Activated B cell treated with CpG ODN at 0.5 μM for 24 hours (primary cell): ENCODE measurements at regions of chr16 and their contacts with region 1.

Region 1: GRCh38 chr16:684067-684794 is at the start of gene JMJD8:
- DNase-seq: peak; percentile 98
- ATAC-seq: peak; percentile 49
- H3K4me3 Mint-ChIP-seq: peak within 1 kb of the TSS; percentile 87
- H3K27ac Mint-ChIP-seq: peak within 1 kb of the TSS; percentile 70
- H3K4me1 Mint-ChIP-seq: peaks cover 38% of the 10 kb centered on the region
- H3K27me3 Mint-ChIP-seq: no peaks in the 10 kb centered on the region
- CTCF ChIP-seq: no peak
- total RNA-seq, gene JMJD8: 41.4 and 47.0 TPM in 2 replicates

Region 2: DNA sequence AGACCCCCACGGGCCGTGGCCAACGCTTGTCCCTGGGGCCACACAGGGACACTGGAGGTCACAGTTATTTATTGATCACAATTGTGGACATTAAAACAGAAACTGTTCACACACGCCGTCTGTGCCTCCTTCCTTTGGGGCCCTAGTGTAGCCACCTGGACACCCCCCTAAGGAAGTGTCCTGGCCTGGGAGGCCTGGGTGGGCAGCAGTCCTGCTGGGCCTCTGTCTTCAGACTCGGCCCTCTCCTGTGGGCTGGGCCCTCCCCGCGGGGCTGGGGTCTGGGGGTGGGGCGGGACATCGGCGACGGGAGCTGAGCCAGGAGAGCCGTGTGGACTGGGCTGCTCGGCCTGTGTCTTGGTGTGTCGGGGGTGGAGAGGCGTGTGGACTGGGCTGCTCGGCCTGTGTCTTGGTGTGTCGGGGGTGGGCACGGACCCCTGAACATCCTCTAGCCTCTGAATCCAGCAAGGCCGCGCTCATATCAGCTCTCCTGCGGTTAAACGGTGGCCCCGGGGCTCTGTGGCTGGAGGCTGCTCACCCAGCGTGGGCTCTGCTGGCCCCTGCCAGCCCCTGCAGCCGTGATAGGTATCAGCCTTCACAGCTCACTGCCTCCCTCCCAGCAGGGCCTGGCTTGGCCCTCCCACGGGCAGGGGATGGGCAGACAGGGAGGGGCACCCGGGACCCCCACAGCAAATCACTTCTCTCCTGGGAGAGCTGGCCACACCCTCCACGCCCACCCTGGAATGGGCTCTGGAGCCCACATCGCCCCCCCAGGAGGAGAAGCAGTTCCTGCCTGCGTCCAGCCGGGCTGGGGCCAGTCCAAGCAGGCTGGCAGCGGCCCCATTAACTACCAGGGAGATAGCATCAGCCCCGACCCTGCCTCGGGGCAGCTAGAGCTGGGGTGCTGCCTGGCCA is 118.6 kb before region 1 on chr16:
- CTCF ChIA-PET with region 1: no interaction called
- POLR2A ChIA-PET with region 1: no interaction called
- intact Hi-C with region 1: no loop called
- DNase-seq: no peak
- ATAC-seq: no peak
- H3K4me3 Mint-ChIP-seq: no peak overlapping the region
- H3K27ac Mint-ChIP-seq: no peak overlapping the region
- H3K4me1 Mint-ChIP-seq: peaks cover 23% of the 10 kb centered on the region
- H3K27me3 Mint-ChIP-seq: peaks cover 7% of the 10 kb centered on the region
- CTCF ChIP-seq: no peak

Region 3: GRCh38 chr16:648781-649589 is 35.2 kb before region 1 on chr16 and contains the start of gene WDR90:
- CTCF ChIA-PET with region 1: no interaction called
- POLR2A ChIA-PET with region 1: interaction called, 13 read pairs
- intact Hi-C with region 1: loop called (anchors 1 kb)
- DNase-seq: peak; percentile 93
- ATAC-seq: peak; percentile 85
- H3K4me3 Mint-ChIP-seq: peak within 1 kb of the TSS; percentile 84
- H3K27ac Mint-ChIP-seq: peak within 1 kb of the TSS; percentile 85
- H3K4me1 Mint-ChIP-seq: peaks cover 22% of the 10 kb centered on the region
- H3K27me3 Mint-ChIP-seq: no peaks in the 10 kb centered on the region
- CTCF ChIP-seq: no peak
- total RNA-seq, gene WDR90: 24.8 and 33.7 TPM in 2 replicates

Region 4: GRCh38 chr16:660459-661183 is 23.6 kb before region 1 on chr16:
- CTCF ChIA-PET with region 1: no interaction called
- POLR2A ChIA-PET with region 1: interaction called, 4 read pairs
- intact Hi-C with region 1: loop called (anchors 2 kb)
- DNase-seq: peak; percentile 61
- ATAC-seq: peak; percentile 91
- H3K4me3 Mint-ChIP-seq: peak overlapping the region; percentile 55
- H3K27ac Mint-ChIP-seq: no peak overlapping the region
- H3K4me1 Mint-ChIP-seq: peaks cover 7% of the 10 kb centered on the region
- H3K27me3 Mint-ChIP-seq: no peaks in the 10 kb centered on the region
- CTCF ChIP-seq: no peak

Region 5: DNA sequence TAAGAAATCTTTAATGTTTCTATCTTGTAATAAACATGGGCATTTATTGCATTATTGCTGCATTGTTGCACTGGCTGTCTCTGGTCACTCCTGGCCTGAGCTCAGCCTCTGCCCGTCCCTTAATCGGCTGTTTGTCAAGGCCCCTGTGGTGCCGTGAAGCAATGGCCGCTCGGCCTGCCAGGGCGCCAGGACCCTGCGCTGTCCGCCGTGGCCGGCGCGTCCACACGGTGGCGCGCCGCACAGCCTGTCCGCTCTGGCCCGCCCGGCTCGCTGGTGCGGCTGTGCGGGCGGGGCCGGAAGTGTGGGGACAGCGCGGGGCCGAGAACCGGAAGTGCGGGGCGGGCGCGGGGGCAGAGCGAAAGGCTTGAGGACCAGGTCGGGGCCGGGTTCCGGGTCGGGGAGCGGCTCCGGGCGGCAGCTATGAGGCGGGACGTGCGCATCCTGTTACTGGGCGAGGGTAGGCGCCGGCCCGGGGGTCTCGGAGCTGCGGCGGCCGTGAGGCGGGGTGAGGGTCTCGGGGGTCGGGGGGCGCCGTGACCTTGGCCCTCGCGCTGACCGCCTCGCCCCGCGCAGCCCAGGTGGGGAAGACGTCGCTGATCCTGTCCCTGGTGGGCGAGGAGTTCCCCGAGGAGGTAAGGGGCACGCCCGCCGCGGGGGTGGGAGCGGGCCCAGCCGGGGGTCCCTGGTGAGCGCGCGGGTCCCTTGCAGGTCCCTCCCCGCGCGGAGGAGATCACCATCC is 16.3 kb before region 1 on chr16 and contains the start of gene RHOT2:
- CTCF ChIA-PET with region 1: interaction called, 3 read pairs
- POLR2A ChIA-PET with region 1: interaction called, 41 read pairs
- intact Hi-C with region 1: loop called (anchors 1 kb)
- DNase-seq: peak; percentile 96
- ATAC-seq: peak; percentile 98
- H3K4me3 Mint-ChIP-seq: peak within 1 kb of the TSS; percentile 80
- H3K27ac Mint-ChIP-seq: peak within 1 kb of the TSS; percentile 80
- H3K4me1 Mint-ChIP-seq: peaks cover 12% of the 10 kb centered on the region
- H3K27me3 Mint-ChIP-seq: no peaks in the 10 kb centered on the region
- CTCF ChIP-seq: peak; percentile 7
- total RNA-seq, gene RHOT2: 141 and 170 TPM in 2 replicates

Region 6: DNA sequence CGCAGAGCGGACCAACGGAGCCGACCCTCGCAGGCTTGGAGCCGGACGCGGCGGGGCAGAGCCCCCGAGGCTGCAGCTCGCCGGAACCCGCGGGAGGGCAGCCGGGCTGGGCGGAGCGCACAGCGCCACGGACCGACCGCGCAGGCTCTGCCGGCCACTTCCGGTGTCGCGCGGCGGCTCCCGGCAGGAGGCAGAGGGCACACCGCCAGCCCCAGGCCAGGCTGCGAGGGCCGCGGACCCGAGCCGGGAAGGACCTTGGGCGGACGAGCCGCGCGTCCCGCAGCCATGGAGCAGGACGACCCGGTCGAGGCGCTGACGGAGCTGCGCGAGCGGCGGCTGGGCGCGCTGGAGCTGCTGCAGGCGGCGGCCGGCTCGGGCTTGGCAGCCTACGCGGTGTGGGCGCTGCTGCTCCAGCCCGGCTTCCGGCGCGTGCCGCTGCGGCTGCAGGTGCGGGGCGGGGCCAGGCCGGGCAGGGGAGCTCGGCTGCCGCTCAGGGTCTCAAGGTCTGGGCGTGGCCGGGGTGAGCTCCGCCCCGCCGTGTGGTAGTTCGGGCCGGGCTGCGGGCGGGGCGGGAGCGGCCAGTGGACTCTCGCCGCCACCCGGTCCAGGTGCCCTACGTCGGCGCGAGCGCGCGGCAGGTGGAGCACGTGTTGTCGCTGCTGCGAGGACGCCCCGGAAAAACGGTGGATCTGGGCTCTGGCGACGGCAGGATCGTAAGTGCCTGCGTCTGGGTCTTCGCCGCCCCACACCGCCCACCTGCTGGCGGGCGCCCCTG is 36.9 kb after region 1 on chr16 and contains the start of gene ANTKMT:
- CTCF ChIA-PET with region 1: no interaction called
- POLR2A ChIA-PET with region 1: interaction called, 34 read pairs
- intact Hi-C with region 1: loop called (anchors 2 kb)
- DNase-seq: peak; percentile 89
- ATAC-seq: peak; percentile 90
- H3K4me3 Mint-ChIP-seq: peak within 1 kb of the TSS; percentile 80
- H3K27ac Mint-ChIP-seq: peak within 1 kb of the TSS; percentile 73
- H3K4me1 Mint-ChIP-seq: peaks cover 19% of the 10 kb centered on the region
- H3K27me3 Mint-ChIP-seq: peaks cover 3% of the 10 kb centered on the region
- CTCF ChIP-seq: no peak
- total RNA-seq, gene ANTKMT: 58.0 and 67.4 TPM in 2 replicates